Left ventricle myocardium inferior (tissue), 1 donor: ENCODE measurements at regions of chr11 and their contacts with region 1.

Region 1: DNA sequence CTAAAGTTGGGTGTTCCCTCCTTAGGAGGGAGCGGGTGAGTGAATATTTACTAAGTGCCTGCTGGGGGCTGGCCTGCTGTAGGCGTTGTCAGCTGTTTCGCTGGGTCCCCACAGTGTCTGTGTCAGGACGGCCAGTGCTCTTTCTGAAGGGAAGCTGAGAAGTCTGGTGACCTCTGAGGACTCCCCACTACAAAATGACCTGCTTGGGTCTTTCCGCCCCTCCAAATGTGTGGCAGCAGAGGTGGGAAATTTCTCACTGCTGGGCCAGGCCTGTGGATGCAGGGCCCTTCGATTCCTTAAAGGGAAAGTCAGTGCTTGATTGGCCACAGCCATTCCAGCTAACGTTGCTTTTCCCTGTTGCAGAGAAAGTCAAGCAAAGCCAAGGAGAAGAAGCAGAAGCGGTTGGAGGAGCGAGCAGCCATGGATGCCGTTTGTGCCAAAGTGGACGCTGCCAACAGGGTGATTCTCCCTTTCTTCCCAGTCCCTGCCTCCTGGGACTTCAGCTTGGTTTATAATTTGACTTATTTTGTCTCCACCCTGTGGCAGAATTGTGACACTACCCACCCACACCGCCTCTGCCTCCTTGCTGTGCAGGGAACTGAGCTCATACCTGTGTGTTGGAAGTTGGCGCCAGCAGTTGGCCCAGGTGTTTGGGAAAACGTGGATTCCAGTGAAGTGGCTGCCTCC is 6.8 kb downstream of the NAA40 start:
- DNase-seq: peak; percentile 55
- H3K4me3 ChIP-seq: peak overlapping the region; percentile 49
- H3K27ac ChIP-seq: peak overlapping the region; percentile 83
- H3K4me1 ChIP-seq: peaks cover 48% of the 10 kb centered on the region
- H3K27me3 ChIP-seq: no peaks in the 10 kb centered on the region
- CTCF ChIP-seq: peak; percentile 86

Region 2: GRCh38 chr11:63719977-63720376 is 225.6 kb before region 1 on chr11:
- intact Hi-C with region 1: no loop called
- DNase-seq: no peak
- H3K4me3 ChIP-seq: no peak overlapping the region
- H3K27ac ChIP-seq: no peak overlapping the region
- H3K4me1 ChIP-seq: no peaks in the 10 kb centered on the region
- H3K27me3 ChIP-seq: no peaks in the 10 kb centered on the region
- CTCF ChIP-seq: no peak

Region 3: DNA sequence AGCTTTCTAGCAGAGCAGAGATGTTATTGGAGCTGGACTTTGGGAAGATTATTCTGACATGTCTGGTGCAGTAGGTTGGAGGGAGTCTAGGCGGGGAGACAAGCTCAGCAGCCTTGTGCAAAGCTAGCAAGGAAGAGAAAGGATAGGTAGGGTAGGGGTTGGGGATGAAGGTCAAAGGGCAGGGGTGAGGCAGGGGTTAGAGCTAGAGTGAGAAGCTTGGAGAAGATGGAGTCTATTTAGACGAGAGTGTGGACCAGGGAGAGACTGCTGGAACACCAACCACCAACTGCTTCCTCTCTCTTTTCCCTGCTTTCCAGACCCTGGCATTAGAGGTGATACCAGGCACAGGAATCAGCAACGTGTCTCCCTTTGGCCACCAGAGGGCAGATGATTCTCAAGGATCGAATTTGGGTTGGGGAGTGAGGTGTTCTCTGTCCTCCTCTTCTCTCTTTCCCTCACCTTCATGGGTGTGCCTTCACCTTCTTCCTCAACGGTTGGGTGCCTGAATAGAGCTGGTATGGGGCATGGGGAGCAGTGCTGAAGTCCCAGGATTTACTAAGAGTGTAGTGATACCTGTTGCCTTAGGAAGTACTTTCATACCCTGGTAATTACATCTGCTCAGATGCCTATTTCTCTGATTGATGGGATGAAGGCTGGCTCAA is 108.5 kb before region 1 on chr11:
- intact Hi-C with region 1: loop called (anchors 2 kb)
- DNase-seq: peak; percentile 68
- H3K4me3 ChIP-seq: no peak overlapping the region
- H3K27ac ChIP-seq: peak overlapping the region; percentile 88
- H3K4me1 ChIP-seq: peaks cover 42% of the 10 kb centered on the region
- H3K27me3 ChIP-seq: no peaks in the 10 kb centered on the region
- CTCF ChIP-seq: peak; percentile 90